ENCODE measurements at regions of chr6 and their contacts with region 1.

Region 1: GRCh38 chr6:167907837-167908681 is 81.3 kb downstream of the AFDN start:
- DNase-seq: no peak
- ATAC-seq: peak; percentile 42 to 67 (median 50)
- H3K4me3 ChIP-seq: no peak overlapping the region
- H3K27ac ChIP-seq: no peak overlapping the region
- H3K4me1 ChIP-seq: peaks cover 5% of the 10 kb centered on the region
- H3K27me3 ChIP-seq: no peaks in the 10 kb centered on the region
- CTCF ChIP-seq: peak; percentile 54

Region 2: DNA sequence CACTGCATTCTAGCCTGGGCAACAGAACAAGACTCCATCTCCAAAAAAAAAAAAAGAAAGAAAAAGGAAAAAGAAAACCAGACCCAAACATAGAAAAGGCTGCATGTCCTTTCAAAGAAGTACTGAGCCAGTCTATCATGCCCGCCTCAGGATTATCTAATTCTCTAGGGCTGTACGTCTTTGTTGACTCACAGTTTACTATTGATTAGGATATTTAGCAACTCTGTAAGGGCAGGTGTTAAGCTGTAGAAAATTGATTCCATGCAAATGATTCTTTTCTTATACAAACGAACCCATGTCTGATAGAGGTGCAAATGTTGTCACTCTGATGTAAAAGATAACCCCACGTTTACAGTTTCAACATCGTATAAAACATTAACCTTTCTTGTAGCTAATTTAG is 374.2 kb before region 1 on chr6:
- intact Hi-C with region 1: no loop called
- DNase-seq: no peak
- ATAC-seq: no peak
- H3K4me3 ChIP-seq: no peak overlapping the region
- H3K27ac ChIP-seq: no peak overlapping the region
- H3K4me1 ChIP-seq: no peaks in the 10 kb centered on the region
- H3K27me3 ChIP-seq: no peaks in the 10 kb centered on the region
- CTCF ChIP-seq: no peak

Region 3: DNA sequence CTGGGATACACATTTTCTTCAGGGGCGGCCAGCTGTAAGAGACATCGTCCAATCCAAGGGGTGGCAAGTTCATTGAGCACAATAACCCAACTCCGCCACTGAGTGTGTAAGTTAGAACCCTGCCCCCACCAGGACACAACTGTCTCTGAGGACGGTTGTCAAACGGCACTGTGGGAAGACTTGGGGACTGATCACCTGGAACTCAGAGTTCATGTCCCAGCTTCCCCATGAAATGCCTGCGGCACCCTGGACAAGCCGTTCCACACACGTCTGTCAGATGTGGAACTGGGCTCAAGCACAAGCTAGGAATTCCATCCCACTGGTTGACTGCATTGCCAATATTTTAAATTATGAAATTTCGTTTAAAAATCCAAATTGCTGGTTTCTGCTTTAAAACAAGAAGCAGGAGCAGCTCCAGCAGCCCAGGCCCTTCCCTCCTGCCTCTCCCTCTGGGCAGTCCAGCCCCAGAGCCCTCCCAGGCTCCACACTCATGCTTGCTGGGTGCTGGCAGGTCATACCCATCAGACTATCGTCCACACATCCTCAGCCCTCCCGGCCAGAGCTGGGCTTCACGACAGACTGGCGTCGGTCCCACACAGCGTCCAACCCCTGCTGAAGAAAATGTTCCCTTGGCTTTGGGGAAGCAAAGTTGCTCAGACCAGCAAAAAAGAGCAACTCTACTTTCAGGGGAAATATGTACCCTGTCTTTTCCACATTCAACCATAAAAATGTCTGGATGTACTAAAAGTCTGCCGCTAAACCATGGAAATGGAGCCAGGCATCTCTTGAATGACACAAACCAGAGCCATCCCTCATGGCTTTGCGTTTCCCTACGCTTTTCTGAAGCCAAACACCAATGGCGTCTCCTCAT is 162.1 kb before region 1 on chr6:
- intact Hi-C with region 1: loop called in 1 of 2 experiments (anchors 5 kb)
- DNase-seq: peak; percentile 57 to 82
- ATAC-seq: peak in 2 of 4 donors; percentile 46 to 63
- H3K4me3 ChIP-seq: no peak overlapping the region
- H3K27ac ChIP-seq: no peak overlapping the region
- H3K4me1 ChIP-seq: no peaks in the 10 kb centered on the region
- H3K27me3 ChIP-seq: peaks cover 0 to 6% (median 4%) of the 10 kb centered on the region in 3 donors
- CTCF ChIP-seq: no peak

Region 4: DNA sequence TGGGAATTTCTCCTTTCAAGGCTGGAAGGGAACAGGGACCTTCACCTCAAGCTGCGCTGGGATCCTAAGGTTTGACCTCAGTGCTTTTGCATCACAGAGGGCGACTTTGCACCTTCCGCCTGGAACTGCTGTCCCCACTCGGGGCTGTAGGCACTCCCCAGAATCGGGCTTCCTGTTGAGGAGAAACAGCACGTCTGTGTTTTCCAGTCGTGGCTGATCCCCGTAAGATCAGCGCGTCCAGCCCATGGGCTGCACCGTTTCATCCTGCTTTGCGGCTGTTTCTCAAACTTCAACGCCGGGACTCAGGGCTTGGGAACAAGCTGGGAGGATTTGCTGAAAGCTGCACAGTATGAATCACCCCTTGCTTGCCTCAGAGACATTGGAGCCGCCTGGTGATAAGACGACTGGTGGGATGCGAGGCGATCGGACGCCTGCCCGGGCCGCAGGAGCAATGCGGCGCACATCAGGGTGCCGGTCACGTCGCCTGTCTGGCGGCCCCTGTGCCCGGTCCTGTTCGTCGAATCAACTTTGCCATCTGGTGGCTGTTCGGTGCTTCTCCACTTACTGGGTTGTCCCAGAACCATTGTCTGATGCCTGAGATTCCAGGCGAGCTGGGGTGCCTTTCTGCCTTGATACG is 224.6 kb after region 1 on chr6:
- intact Hi-C with region 1: loop called in 1 of 2 experiments (anchors 5 kb)
- DNase-seq: peak; percentile 52 to 80
- ATAC-seq: peak; percentile 76 to 90 (median 80)
- H3K4me3 ChIP-seq: peak overlapping the region; percentile 57
- H3K27ac ChIP-seq: no peak overlapping the region
- H3K4me1 ChIP-seq: peaks cover 6% of the 10 kb centered on the region
- H3K27me3 ChIP-seq: peaks cover 0 to 7% (median 0%) of the 10 kb centered on the region in 3 donors
- CTCF ChIP-seq: peak; percentile 47

Region 5: DNA sequence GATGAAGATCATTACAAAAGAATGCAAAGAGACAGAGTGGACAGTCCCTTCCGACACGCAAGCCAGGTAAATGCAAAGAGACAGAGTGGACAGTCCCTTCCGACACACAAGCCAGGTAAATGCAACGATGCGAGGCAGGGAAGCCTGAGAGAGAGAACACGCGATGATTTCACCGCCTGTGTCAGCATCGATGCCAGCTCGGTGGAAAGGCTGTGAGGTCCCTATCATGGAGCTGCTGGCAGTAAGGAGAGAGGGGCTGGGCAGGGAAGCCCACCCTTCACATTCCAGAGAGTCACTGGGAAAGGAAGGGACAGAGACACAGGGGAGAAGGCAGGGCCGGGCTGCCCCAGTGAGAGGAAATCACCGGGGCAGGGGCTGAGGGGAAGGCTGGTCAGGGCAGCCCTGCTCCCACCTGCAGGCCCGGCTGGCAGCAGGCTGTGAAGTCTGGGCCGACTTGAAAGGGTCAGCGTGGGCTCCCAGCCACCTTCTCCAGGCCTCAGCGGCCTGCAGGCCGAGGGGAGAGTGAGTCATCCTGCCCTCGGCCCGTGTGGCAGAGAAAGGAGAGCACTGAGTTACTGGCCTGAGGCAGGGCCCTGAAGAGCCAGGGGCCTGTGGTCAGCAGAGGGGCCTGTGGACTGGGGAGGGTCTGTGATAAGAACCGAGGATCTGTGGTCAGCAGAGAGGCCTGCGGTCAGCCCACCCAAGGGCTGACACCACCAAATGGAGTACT is 331.1 kb after region 1 on chr6:
- intact Hi-C with region 1: no loop called
- DNase-seq: no peak
- ATAC-seq: no peak
- H3K4me3 ChIP-seq: no peak overlapping the region
- H3K27ac ChIP-seq: no peak overlapping the region
- H3K4me1 ChIP-seq: no peaks in the 10 kb centered on the region
- H3K27me3 ChIP-seq: peaks cover 0 to 2% (median 0%) of the 10 kb centered on the region in 3 donors
- CTCF ChIP-seq: no peak